HCT116 (cell line): ENCODE measurements at regions of chr7 and their contacts with region 1.

Region 1: DNA sequence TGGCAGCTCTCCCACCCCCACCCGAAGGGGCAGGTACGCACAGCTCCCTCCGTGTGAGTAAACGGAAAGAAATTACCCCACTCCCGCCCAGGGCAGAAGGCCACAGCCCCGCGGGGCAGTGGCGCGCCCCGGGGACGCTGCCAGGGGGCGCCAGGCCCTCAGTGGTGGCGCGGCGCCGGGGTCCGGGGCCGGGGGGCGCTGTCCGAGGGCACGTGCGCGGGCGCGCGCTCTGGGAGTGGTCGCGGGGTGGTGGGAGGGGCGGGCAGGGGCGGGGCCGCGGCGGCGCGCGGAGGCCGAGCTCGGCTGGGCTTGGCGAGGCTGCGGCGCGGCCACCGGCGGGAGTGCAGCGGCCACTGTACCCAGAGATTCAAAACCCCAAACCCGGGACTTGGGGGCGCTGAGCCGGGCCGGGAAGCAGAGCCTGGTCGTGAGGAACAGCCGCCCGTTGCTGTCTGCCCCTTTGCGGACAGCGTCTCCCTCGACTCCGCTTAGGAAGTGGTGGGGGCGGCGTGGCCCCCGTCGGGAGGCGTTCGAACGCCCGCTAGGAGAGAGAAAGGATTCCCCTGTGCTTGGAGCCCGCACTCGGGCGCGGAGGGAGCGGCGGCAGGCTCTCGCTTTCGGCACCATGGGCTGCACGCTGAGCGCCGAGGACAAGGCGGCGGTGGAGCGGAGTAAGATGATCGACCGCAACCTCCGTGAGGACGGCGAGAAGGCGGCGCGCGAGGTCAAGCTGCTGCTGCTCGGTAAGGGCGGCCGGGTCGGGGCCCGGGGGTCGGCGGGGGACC is at the start of gene GNAI1:
- DNase-seq: peak; percentile 60
- ATAC-seq: peak; percentile 84
- H3K4me3 ChIP-seq: peak within 1 kb of the TSS; percentile 76 to 95
- H3K27ac ChIP-seq: peak within 1 kb of the TSS; percentile 98
- H3K4me1 ChIP-seq: peaks cover 42 to 54% of the 10 kb centered on the region in 2 experiments
- H3K27me3 ChIP-seq: no peaks in the 10 kb centered on the region
- CTCF ChIP-seq: peak; percentile 41 to 44 (median 42); a peak in 4 of 6 replicates
- POLR2A ChIP-seq: peak; percentile 36
- RAD21 ChIP-seq: peak; percentile 61
- total RNA-seq, gene GNAI1: 148 TPM

Region 2: GRCh38 chr7:79495544-79496272 is 639.0 kb before region 1 on chr7:
- CTCF ChIA-PET with region 1: no interaction called
- POLR2A ChIA-PET with region 1: no interaction called
- RAD21 ChIA-PET with region 1: no interaction called
- intact Hi-C with region 1: no loop called
- DNase-seq: no peak
- ATAC-seq: no peak
- H3K4me3 ChIP-seq: no peak overlapping the region
- H3K27ac ChIP-seq: no peak overlapping the region
- H3K4me1 ChIP-seq: no peaks in the 10 kb centered on the region
- H3K27me3 ChIP-seq: no peaks in the 10 kb centered on the region
- CTCF ChIP-seq: no peak
- POLR2A ChIP-seq: no peak
- RAD21 ChIP-seq: no peak

Region 3: GRCh38 chr7:80095545-80095944 is 39.2 kb before region 1 on chr7:
- CTCF ChIA-PET with region 1: interaction called, 4 read pairs
- POLR2A ChIA-PET with region 1: no interaction called
- RAD21 ChIA-PET with region 1: no interaction called
- intact Hi-C with region 1: loop called (anchors 5 kb)
- DNase-seq: no peak
- ATAC-seq: peak; percentile 47; the same call in 1 of the 2 replicates
- H3K4me3 ChIP-seq: no peak overlapping the region
- H3K27ac ChIP-seq: no peak overlapping the region
- H3K4me1 ChIP-seq: peaks cover 6 to 19% of the 10 kb centered on the region in 2 experiments; a peak in 3 of 4 replicates
- H3K27me3 ChIP-seq: no peaks in the 10 kb centered on the region
- CTCF ChIP-seq: peak; percentile 27 to 56 (median 28); a peak in 3 of 6 replicates
- POLR2A ChIP-seq: no peak
- RAD21 ChIP-seq: peak; percentile 57

Region 4: DNA sequence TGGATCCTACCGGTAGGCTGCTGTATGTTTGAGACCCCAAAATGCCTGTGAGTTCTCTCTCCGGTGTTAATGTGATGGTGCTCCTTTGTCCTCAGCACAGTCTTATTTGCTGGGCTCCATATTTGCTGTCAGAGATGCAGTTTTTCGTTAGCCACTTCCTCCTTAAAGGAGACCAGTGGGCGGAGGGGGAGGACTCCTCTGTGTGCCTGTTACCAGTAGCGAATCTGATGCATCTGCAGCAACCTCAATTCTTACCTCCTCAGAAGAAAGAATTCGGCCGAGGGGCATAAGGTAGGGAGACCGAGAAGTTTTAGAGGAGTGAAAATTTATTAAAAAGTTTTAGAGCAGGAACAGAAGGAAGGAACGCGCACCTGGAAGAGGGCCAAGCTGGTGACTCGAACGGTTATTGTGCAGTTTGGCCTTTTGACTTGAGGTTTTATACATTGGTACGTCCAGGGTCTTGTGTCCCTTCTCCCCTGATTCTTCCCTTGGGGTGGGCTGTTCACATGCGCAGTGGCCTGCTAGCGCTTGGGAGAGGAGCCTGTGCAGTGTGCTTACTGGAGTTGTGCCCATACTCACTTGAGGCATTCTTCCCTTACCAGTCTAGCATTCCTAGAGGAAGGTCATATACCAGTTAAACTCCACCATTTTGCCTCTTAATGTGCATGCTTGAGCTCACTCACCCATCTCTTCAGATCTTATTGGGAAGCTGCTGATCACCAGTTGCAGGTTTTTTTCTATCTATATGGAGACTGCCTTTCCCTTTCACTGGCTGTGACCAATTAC is 49.4 kb after region 1 on chr7:
- CTCF ChIA-PET with region 1: no interaction called
- POLR2A ChIA-PET with region 1: no interaction called
- RAD21 ChIA-PET with region 1: no interaction called
- intact Hi-C with region 1: loop called (anchors 5 kb)
- DNase-seq: peak; percentile 46
- ATAC-seq: peak; percentile 62
- H3K4me3 ChIP-seq: peak overlapping the region; percentile 29 to 40
- H3K27ac ChIP-seq: peak overlapping the region; percentile 74
- H3K4me1 ChIP-seq: peaks cover 85 to 98% of the 10 kb centered on the region in 2 experiments
- H3K27me3 ChIP-seq: no peaks in the 10 kb centered on the region
- CTCF ChIP-seq: no peak
- POLR2A ChIP-seq: no peak
- RAD21 ChIP-seq: no peak

Region 5: GRCh38 chr7:80244206-80244916 is 109.6 kb after region 1 on chr7:
- CTCF ChIA-PET with region 1: no interaction called
- POLR2A ChIA-PET with region 1: no interaction called
- RAD21 ChIA-PET with region 1: no interaction called
- intact Hi-C with region 1: no loop called
- DNase-seq: no peak
- ATAC-seq: no peak
- H3K4me3 ChIP-seq: no peak overlapping the region
- H3K27ac ChIP-seq: no peak overlapping the region
- H3K4me1 ChIP-seq: no peaks in the 10 kb centered on the region
- H3K27me3 ChIP-seq: no peaks in the 10 kb centered on the region
- CTCF ChIP-seq: no peak
- POLR2A ChIP-seq: no peak
- RAD21 ChIP-seq: no peak

Region 6: GRCh38 chr7:80277434-80278427 is 143.0 kb after region 1 on chr7:
- CTCF ChIA-PET with region 1: no interaction called
- POLR2A ChIA-PET with region 1: interaction called, 3 read pairs
- RAD21 ChIA-PET with region 1: no interaction called
- intact Hi-C with region 1: loop called (anchors 5 kb)
- DNase-seq: peak; percentile 92
- ATAC-seq: peak; percentile 76
- H3K4me3 ChIP-seq: peak overlapping the region; percentile 8 to 45; a peak in 3 of 4 replicates
- H3K27ac ChIP-seq: peak overlapping the region; percentile 99
- H3K4me1 ChIP-seq: peaks cover 72 to 93% of the 10 kb centered on the region in 2 experiments
- H3K27me3 ChIP-seq: no peaks in the 10 kb centered on the region
- CTCF ChIP-seq: no peak
- POLR2A ChIP-seq: no peak
- RAD21 ChIP-seq: no peak; the same call in 1 of the 2 replicates

Region 7: DNA sequence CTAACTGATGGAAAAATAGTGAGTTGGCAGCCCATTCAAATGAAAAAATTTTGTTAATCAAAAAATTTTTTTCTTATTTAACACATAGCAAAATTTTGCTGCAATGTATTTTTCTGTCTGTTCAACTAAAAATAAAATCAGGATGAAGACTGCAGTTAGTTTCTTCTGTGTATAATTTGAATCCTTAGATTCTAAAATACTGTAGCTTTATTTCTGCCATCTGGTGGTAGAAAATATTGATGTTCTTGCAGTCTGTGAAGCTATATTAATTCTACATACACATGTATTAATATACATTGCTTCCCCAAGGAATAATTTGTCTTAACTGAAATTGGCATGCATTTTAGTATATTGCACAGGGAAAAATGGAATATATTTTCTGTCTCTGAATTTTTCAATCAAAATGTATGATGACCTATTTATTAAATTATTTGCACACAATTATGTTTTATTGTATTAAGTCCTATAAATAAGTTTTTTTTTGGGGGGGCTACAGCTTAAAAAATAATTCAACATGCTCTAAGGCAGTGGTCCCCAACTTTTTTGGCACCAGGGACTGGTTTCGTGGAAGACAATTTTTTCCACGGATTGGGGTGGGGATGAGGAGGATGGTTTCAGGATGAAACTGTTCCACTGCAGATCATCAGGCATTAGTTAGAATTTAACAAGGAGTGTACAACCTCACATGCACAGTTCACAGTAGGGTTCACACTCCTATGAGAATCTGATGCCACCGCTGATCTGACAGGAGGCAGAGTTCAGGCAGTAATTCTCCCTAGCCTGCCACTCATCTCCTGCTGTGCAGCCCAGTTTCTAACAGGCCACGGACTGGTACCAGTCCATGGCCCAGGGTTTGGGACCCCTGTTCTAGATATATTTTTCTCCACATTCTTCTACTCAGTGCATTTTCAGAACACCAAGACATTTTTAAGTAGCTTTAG is 257.8 kb after region 1 on chr7:
- CTCF ChIA-PET with region 1: interaction called, 15 read pairs
- POLR2A ChIA-PET with region 1: no interaction called
- RAD21 ChIA-PET with region 1: interaction called in 1 of 2 experiments, 3 read pairs
- intact Hi-C with region 1: loop called (anchors 2 kb)
- DNase-seq: peak; percentile 7
- ATAC-seq: no peak
- H3K4me3 ChIP-seq: no peak overlapping the region
- H3K27ac ChIP-seq: no peak overlapping the region
- H3K4me1 ChIP-seq: no peaks in the 10 kb centered on the region; a peak in 1 of 4 replicates
- H3K27me3 ChIP-seq: no peaks in the 10 kb centered on the region
- CTCF ChIP-seq: peak; percentile 27 to 49 (median 48); a peak in 4 of 6 replicates
- POLR2A ChIP-seq: no peak
- RAD21 ChIP-seq: peak; percentile 56